Breast epithelium (tissue), 4 donors: ENCODE measurements at regions of chr6 and their contacts with region 1.

Region 1: DNA sequence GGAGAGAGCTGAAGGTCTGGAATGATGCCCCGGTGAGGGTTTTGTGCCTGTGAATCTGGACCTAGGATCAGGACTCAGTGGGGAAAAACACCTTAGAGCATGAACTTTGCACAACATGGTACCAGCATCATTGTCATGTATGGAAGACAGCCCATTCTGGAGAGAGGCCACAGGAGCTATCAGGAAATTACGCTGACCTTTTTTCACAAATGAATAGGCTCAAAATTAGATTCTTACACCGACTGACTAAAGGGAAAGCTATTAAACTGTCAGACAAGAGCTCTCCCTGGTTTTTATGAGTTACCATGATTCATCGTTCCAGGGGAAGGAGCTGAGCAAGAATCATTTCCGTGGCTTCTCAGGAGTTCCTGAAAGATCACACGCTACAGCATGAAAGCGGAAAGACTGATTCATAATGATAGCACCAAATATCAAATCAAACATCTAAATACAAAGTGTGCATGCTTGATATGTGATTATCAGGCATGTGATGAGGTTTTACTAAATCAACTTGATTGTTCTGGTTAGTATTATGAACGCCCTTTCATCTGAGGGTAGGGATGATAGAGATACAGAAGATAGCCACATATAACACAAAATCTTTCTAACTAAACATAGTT is 224.9 kb upstream of the SMLR1 start:
- DNase-seq: no peak
- H3K4me3 ChIP-seq: no peak overlapping the region
- H3K27ac ChIP-seq: no peak overlapping the region
- H3K4me1 ChIP-seq: no peaks in the 10 kb centered on the region
- H3K27me3 ChIP-seq: no peaks in the 10 kb centered on the region
- CTCF ChIP-seq: no peak
- POLR2A ChIP-seq: no peak

Region 2: DNA sequence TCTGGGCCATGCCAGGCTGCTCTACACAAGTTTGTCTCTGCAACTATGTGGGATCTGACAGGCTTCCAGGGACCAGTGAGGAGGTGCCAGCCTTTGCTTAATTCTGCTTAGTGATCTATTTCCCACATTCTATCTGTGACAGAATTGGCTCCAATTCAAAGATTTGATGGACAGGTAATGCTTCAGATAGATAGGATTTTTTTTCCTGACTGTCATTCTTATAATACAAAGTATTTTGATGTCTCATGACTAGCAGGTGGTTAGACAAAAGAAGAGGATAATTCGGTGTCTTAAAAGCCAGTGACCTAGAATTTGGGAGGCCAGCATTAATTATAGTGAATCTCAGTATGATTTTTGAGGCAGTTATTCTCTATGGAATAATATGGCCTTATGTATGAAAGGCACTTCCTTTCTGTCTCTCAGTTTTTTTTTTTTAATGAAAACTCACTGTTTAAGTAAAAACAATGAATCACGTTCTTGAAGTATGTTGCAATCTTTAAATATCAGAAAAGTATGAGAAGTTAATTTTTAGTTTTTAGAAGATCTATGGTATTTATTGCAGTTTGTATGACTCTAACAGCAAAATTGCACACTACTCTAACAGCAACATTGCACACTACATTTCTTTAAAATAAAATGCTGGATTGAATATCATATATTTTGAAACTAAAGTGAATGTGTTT is 192.7 kb before region 1 on chr6:
- intact Hi-C with region 1: no loop called
- DNase-seq: no peak
- H3K4me3 ChIP-seq: no peak overlapping the region
- H3K27ac ChIP-seq: no peak overlapping the region
- H3K4me1 ChIP-seq: no peaks in the 10 kb centered on the region
- H3K27me3 ChIP-seq: no peaks in the 10 kb centered on the region
- CTCF ChIP-seq: no peak
- POLR2A ChIP-seq: no peak

Region 3: DNA sequence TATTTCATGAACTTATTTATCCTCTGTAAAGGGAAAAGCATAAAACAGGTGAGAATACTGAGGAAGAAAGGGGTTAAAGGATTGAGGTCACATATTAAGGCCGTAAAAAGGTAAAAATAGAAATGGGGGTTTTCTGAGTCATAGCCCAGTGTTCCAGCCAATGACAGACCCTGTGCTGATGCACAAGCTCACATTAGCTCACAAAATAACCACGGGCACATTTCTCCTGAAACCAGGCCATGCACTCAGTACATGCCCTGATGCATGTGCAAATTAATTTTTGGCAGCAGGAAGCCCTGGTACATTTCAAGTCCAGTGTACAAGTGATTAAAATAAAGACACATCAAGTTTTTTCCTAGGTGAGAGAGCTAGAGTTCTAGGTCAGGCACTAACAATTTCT is 42.0 kb before region 1 on chr6:
- intact Hi-C with region 1: loop called (anchors 1 kb)
- DNase-seq: no peak
- H3K4me3 ChIP-seq: no peak overlapping the region
- H3K27ac ChIP-seq: no peak overlapping the region
- H3K4me1 ChIP-seq: no peaks in the 10 kb centered on the region
- H3K27me3 ChIP-seq: no peaks in the 10 kb centered on the region
- CTCF ChIP-seq: no peak
- POLR2A ChIP-seq: no peak

Region 4: DNA sequence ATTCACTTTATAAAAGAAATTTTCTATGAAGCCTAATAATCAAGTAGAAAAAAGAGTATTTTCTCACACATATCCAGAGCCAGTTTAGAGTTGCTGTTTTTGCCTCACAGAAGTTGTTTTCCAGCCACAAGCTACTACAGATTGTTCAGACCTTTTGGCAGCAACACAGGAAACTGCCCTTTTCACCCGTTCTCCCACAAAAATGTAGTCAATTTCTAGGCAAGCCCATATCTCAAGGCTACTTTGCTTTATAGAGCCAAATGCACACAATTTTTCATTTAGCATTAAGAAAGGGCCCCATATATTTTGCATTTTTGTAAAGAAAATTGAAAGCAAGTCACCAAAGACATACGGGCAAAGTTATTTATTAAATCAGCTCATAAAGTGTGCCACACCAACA is 411.2 kb after region 1 on chr6:
- intact Hi-C with region 1: no loop called
- DNase-seq: no peak
- H3K4me3 ChIP-seq: peak overlapping the region; percentile 3 to 16 (median 15)
- H3K27ac ChIP-seq: peak overlapping the region; percentile 2 to 10
- H3K4me1 ChIP-seq: peaks cover 0 to 17% of the 10 kb centered on the region in 2 donors
- H3K27me3 ChIP-seq: no peaks in the 10 kb centered on the region
- CTCF ChIP-seq: no peak
- POLR2A ChIP-seq: no peak